ENCODE measurements at regions of chr12 and their contacts with region 1.

Region 1: GRCh38 chr12:123043536-123044001 is 63.1 kb downstream of the ARL6IP4 start:
- DNase-seq: peak; percentile 85
- H3K4me3 Mint-ChIP-seq: no peak overlapping the region
- H3K27ac Mint-ChIP-seq: no peak overlapping the region
- H3K4me1 Mint-ChIP-seq: peaks cover 21% of the 10 kb centered on the region
- H3K27me3 Mint-ChIP-seq: no peaks in the 10 kb centered on the region

Region 2: DNA sequence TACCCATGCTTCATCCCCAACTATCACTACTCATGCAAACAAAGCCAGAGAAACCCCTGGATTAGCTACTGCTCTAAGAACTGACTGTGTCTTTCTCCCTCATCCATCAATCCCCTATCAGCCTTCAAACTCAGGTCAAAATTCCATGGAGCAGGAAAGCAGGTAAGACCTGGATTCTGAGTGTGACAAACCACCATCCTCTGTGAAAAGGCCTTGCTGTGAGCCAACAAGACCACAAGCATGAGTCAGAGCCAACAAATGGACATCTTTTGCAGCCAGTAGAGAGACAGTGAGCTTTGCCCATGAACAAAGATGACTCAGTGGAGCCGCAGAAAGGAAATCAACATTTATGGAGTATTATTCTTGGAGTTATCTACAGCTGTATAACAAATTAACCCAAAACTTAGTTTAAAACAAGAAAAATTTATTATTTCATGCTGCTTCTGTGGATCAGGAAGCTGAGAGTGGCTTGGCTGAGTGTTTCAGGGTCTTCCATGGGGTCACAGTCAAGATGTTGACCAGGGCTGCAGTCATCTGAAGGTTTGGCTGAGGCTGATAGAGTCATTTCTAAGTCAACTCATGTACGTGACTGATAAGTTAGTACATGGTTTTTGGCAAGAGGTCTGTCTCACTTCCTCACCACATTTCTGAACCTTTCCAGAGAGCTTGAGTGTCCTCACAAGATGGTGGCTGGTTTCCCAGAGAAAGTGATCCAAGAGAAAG is 46.2 kb after region 1 on chr12:
- CTCF ChIA-PET with region 1: no interaction called
- POLR2A ChIA-PET with region 1: no interaction called
- intact Hi-C with region 1: no loop called
- DNase-seq: peak; percentile 32
- H3K4me3 Mint-ChIP-seq: no peak overlapping the region
- H3K27ac Mint-ChIP-seq: no peak overlapping the region
- H3K4me1 Mint-ChIP-seq: peaks cover 7% of the 10 kb centered on the region
- H3K27me3 Mint-ChIP-seq: no peaks in the 10 kb centered on the region

Region 3: DNA sequence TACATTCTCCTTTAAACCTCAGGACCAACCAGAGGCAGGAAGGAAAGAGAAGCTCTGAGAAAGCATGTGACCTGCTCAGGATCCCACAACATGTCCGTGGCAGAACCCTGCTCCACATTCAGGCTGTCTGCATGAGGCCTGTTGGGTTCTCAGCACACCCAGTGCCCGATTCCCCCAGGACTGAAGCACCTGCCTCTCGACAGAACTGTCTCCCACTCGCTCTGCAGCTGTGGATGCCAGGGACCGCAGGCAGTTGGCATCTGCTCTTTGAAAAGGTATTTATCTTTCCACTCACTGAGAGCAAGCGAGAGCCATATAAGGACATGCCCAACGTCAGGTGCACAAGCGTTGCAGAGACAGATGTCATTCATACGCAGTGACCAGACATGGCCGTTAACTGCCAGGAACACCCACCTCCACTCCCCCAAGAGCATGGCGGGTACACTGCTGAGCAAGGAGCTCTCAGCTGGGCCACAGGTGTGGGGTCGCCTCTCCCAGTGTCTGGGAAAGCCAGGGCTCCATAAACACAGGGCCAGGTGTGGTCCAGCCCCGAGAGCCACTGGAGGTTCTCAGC is 88.4 kb after region 1 on chr12:
- CTCF ChIA-PET with region 1: no interaction called
- POLR2A ChIA-PET with region 1: no interaction called
- intact Hi-C with region 1: loop called (anchors 5 kb)
- DNase-seq: peak; percentile 53
- H3K4me3 Mint-ChIP-seq: peak overlapping the region; percentile 54
- H3K27ac Mint-ChIP-seq: peak overlapping the region; percentile 64
- H3K4me1 Mint-ChIP-seq: peaks cover 24% of the 10 kb centered on the region
- H3K27me3 Mint-ChIP-seq: no peaks in the 10 kb centered on the region

Region 4: GRCh38 chr12:123150744-123151456 is 107.3 kb after region 1 on chr12 and contains the start of gene PITPNM2:
- CTCF ChIA-PET with region 1: interaction called, 4 read pairs
- POLR2A ChIA-PET with region 1: interaction called, 4 read pairs
- intact Hi-C with region 1: loop called (anchors 2 kb)
- DNase-seq: peak; percentile 66
- H3K4me3 Mint-ChIP-seq: peak within 1 kb of the TSS; percentile 75
- H3K27ac Mint-ChIP-seq: no peak within 1 kb of the TSS
- H3K4me1 Mint-ChIP-seq: peaks cover 27% of the 10 kb centered on the region
- H3K27me3 Mint-ChIP-seq: peaks cover 4% of the 10 kb centered on the region
- total RNA-seq, gene PITPNM2: 5.9 to 6.5 TPM

Measured in activated CD4-positive, alpha-beta memory T cell treated with anti-CD3 and anti-CD28 coated beads for 36 hours (primary cell).